Caco-2 (cell line): ENCODE measurements at regions of chr21 and their contacts with region 1.

Region 1: GRCh38 chr21:42330380-42331359 is 15.5 kb upstream of the TFF3 start:
- DNase-seq: peak; percentile 52 to 61
- H3K4me3 ChIP-seq: no peak overlapping the region
- H3K4me3 Mint-ChIP-seq: peak overlapping the region; percentile 66
- H3K27ac Mint-ChIP-seq: peak overlapping the region; percentile 90
- H3K4me1 ChIP-seq: peaks cover 33% of the 10 kb centered on the region
- H3K4me1 Mint-ChIP-seq: peaks cover 40% of the 10 kb centered on the region
- H3K27me3 ChIP-seq: no peaks in the 10 kb centered on the region
- H3K27me3 Mint-ChIP-seq: no peaks in the 10 kb centered on the region
- CTCF ChIP-seq: peak in 1 of 2 experiments; percentile 8

Region 2: GRCh38 chr21:42315296-42315891 is 15.3 kb before region 1 on chr21 and contains the start of gene TFF3:
- CTCF ChIA-PET with region 1: interaction called, 4 read pairs
- POLR2A ChIA-PET with region 1: interaction called, 6 read pairs
- intact Hi-C with region 1: loop called (anchors 1 kb)
- DNase-seq: peak; percentile 80 to 88
- H3K4me3 ChIP-seq: peak within 1 kb of the TSS; percentile 12
- H3K4me3 Mint-ChIP-seq: peak within 1 kb of the TSS; percentile 73
- H3K27ac Mint-ChIP-seq: peak within 1 kb of the TSS; percentile 83
- H3K4me1 ChIP-seq: peaks cover 32% of the 10 kb centered on the region
- H3K4me1 Mint-ChIP-seq: peaks cover 11% of the 10 kb centered on the region
- H3K27me3 ChIP-seq: no peaks in the 10 kb centered on the region
- H3K27me3 Mint-ChIP-seq: no peaks in the 10 kb centered on the region
- CTCF ChIP-seq: no peak
- total RNA-seq, gene TFF3: 65.8 and 119 TPM in 2 replicates

Region 3: DNA sequence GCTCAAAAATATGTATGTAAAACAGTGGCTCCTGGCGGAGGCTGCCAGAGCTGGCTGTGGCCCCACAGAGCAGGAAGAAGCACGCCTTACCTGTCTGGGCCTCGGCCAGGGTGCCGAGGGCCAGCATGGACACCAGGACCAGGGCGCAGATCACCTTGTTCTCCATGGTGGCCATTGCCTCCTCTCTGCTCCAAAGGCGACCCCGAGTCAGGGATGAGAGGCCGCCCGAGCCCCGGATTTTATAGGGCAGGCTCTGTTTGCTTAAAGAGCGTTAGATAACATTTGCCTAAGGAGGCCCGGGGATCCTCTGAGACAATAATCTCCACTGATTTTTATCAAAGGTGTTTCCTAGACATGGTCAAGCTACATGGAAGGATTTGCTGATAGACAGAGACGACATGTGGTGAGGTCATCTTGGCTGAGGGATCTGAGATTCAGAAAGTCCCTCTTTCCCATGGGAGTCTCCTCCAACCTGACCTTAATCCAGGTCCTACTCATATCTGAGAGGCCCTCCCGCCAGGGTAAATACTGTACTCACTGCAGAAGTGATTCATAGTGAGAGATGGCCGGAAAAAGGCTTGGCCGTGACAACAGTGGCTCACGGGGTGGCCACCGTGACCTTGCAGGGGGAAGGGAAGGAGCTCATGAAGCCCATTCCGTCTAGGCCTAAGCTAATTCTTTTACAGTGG is 35.8 kb after region 1 on chr21 and contains the start of gene TFF1:
- CTCF ChIA-PET with region 1: interaction called, 3 read pairs
- POLR2A ChIA-PET with region 1: no interaction called
- intact Hi-C with region 1: loop called (anchors 5 kb)
- DNase-seq: peak; percentile 66 to 81
- H3K4me3 ChIP-seq: no peak within 1 kb of the TSS
- H3K4me3 Mint-ChIP-seq: peak within 1 kb of the TSS; percentile 43
- H3K27ac Mint-ChIP-seq: peak within 1 kb of the TSS; percentile 80
- H3K4me1 ChIP-seq: peaks cover 22% of the 10 kb centered on the region
- H3K4me1 Mint-ChIP-seq: peaks cover 36% of the 10 kb centered on the region
- H3K27me3 ChIP-seq: no peaks in the 10 kb centered on the region
- H3K27me3 Mint-ChIP-seq: no peaks in the 10 kb centered on the region
- CTCF ChIP-seq: no peak
- total RNA-seq, gene TFF1: 9.8 and 26.3 TPM in 2 replicates